ENCODE measurements at regions of chr4 and their contacts with region 1.

Region 1: GRCh38 chr4:184824081-184824775 is 1.5 kb downstream of the ACSL1 start:
- DNase-seq: no peak
- H3K4me3 ChIP-seq: peak overlapping the region; percentile 53 to 92 (median 73)
- H3K27ac ChIP-seq: peak overlapping the region in 1 of 2 donors; percentile 83
- H3K4me1 ChIP-seq: peaks cover 0 to 3% of the 10 kb centered on the region in 2 donors
- H3K27me3 ChIP-seq: no peaks in the 10 kb centered on the region
- CTCF ChIP-seq: no peak
- POLR2A ChIP-seq: no peak

Region 2: DNA sequence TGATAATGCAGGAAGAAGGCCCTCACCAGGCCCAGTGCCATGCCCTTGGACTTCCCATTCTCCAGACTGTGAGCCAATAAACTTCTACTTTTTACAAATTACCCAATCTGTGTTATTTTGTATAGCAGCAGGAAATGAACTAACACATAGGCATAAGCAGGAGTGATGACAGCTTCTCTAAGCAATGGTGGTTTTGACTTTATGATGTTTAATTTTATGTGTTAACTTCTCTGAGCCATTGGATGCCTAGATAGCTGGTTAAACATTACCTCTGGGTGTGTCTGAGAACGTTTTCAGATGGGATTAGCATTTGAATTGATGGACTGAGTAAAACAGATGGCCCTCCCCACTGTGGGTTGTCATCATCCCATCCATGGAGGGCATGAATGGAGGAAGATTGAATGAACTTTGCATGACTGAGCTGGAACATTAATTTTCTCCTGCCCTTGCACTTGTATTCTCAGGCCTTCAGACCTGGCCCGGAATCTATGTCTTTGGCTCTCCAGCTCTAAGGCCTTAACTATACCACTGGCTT is 724.9 kb after region 1 on chr4:
- intact Hi-C with region 1: loop called (anchors 5 kb)
- DNase-seq: no peak
- H3K4me3 ChIP-seq: no peak overlapping the region
- H3K27ac ChIP-seq: no peak overlapping the region
- H3K4me1 ChIP-seq: no peaks in the 10 kb centered on the region
- H3K27me3 ChIP-seq: no peaks in the 10 kb centered on the region
- CTCF ChIP-seq: no peak
- POLR2A ChIP-seq: no peak

Measured in breast epithelium (tissue), 4 donors.